ENCODE measurements at regions of chr10 and their contacts with region 1.

Region 1: DNA sequence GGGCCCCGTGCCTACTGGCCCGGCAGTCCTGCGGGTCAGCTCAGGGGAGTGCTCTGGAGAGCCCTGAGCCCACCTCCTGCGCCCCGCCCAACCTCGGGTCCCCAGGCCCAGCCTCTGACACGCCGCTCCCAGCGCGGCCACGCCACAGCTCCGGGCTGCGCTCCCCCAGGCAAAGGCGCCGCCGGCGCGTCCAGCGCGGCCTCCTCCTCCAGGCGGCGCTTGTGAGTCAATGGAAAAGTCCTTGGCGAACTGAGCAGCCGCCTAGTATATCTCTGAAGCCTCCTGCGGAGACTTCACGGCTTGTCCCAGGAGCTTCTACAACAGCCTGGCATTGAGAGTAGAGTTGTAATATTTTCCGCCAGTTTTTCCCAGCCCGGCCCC is 29.5 kb upstream of the BMS1 start:
- DNase-seq: peak; percentile 4
- H3K4me3 ChIP-seq: peak overlapping the region; percentile 48
- CTCF ChIP-seq: peak; percentile 82

Region 2: DNA sequence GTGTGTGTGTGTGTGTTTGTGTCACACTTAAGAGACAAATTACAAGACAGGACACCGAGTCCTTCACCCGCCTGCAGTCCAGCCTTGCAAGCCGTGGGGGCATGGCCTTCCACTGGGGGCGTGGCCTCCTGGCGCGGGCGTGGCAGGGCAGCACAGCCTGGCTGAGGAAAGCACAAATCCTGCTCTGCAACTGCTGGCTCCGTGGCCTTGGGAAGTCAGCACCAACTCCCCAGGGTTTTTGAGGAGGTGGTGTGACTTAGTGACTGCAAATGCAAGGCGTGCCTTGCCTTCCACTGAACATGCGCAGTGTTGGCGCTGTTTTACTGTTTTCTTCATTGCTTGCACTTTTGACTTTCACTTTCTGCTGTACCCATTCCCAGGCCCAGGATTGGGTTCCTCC is 16.5 kb after region 1 on chr10:
- CTCF ChIA-PET with region 1: interaction called, 19 read pairs
- POLR2A ChIA-PET with region 1: no interaction called
- DNase-seq: no peak
- H3K4me3 ChIP-seq: no peak overlapping the region
- CTCF ChIP-seq: no peak

Region 3: GRCh38 chr10:42782446-42783180 is 29.5 kb after region 1 on chr10 and contains the start of gene BMS1:
- CTCF ChIA-PET with region 1: interaction called, 26 read pairs
- POLR2A ChIA-PET with region 1: interaction called, 5 read pairs
- DNase-seq: peak; percentile 77
- H3K4me3 ChIP-seq: peak within 1 kb of the TSS; percentile 89
- CTCF ChIP-seq: no peak

Region 4: GRCh38 chr10:43105102-43105785 is 352.1 kb after region 1 on chr10:
- CTCF ChIA-PET with region 1: interaction called, 15 read pairs
- POLR2A ChIA-PET with region 1: no interaction called
- DNase-seq: no peak
- H3K4me3 ChIP-seq: peak overlapping the region; percentile 61
- CTCF ChIP-seq: peak; percentile 100

Measured in AG04449 (cell line).